Activated CD4-positive, alpha-beta T cell treated with anti-CD3 and anti-CD28 coated beads, Interleukin-2, amount 10 ng/mL, durations not matched to agents 24 days and 14 days (primary cell): ENCODE measurements at regions of chr21 and their contacts with region 1.

Region 1: DNA sequence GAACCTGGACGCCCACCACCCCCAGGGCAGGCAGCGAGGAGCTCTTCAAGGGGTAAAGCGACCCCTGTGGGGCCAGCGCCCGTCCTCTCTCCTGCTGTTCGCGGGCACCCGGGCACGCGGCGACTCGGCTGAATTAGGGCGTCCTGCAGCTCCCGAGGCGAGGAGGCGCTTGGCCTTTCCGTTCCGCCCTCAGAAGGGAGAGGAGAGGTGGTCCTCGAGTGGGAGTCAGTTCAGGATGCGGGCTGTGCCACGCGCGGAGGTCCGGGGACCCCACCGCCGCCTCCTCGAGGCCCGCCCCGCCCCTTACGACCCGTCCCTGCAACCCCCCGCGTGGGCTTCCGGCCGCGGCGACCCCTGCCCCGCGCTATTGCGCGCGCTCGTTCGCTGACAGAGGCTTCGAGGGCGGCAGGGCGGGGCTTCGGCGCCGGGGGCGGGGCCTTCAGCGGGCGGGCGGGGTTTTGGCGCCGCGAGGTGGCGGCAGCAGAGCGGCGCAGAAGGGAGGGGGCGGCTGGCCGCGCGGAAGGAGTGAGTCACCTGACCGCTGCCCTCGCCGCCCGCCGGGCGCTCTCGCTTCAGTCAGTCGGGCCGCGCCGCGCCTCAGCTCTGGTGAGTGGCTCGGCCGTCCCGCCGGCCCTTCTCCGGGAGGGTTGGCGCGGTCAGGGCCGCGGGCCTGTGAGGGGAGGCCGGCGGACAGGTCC is at the start of gene BACH1:
- DNase-seq: peak; percentile 94
- H3K4me3 Mint-ChIP-seq: peak within 1 kb of the TSS; percentile 91
- H3K27ac Mint-ChIP-seq: peak within 1 kb of the TSS; percentile 96
- H3K4me1 Mint-ChIP-seq: peaks cover 49% of the 10 kb centered on the region
- H3K27me3 Mint-ChIP-seq: no peaks in the 10 kb centered on the region
- total RNA-seq, gene BACH1: 21.5 and 24.8 TPM in 2 replicates

Region 2: GRCh38 chr21:28884976-28885852 is 413.3 kb before region 1 on chr21:
- intact Hi-C with region 1: loop called (anchors 5 kb)
- DNase-seq: peak; percentile 98
- H3K4me3 Mint-ChIP-seq: peak overlapping the region; percentile 89
- H3K27ac Mint-ChIP-seq: peak overlapping the region; percentile 97
- H3K4me1 Mint-ChIP-seq: peaks cover 14% of the 10 kb centered on the region
- H3K27me3 Mint-ChIP-seq: peaks cover 20% of the 10 kb centered on the region

Region 3: GRCh38 chr21:29024474-29025327 is 273.8 kb before region 1 on chr21 and contains the start of gene USP16:
- intact Hi-C with region 1: loop called (anchors 10 kb)
- DNase-seq: peak; percentile 99
- H3K4me3 Mint-ChIP-seq: peak within 1 kb of the TSS; percentile 93
- H3K27ac Mint-ChIP-seq: peak within 1 kb of the TSS; percentile 99
- H3K4me1 Mint-ChIP-seq: peaks cover 41% of the 10 kb centered on the region
- H3K27me3 Mint-ChIP-seq: no peaks in the 10 kb centered on the region
- total RNA-seq, gene USP16: 45.7 and 46.7 TPM in 2 replicates

Region 4: GRCh38 chr21:29091032-29091431 is 207.5 kb before region 1 on chr21:
- intact Hi-C with region 1: loop called (anchors 1 kb)
- DNase-seq: no peak
- H3K4me3 Mint-ChIP-seq: no peak overlapping the region
- H3K27ac Mint-ChIP-seq: no peak overlapping the region
- H3K4me1 Mint-ChIP-seq: peaks cover 17% of the 10 kb centered on the region
- H3K27me3 Mint-ChIP-seq: no peaks in the 10 kb centered on the region

Region 5: GRCh38 chr21:29232601-29233546 is 65.6 kb before region 1 on chr21:
- intact Hi-C with region 1: loop called (anchors 1 kb)
- DNase-seq: peak; percentile 48
- H3K4me3 Mint-ChIP-seq: no peak overlapping the region
- H3K27ac Mint-ChIP-seq: peak overlapping the region; percentile 39
- H3K4me1 Mint-ChIP-seq: peaks cover 36% of the 10 kb centered on the region
- H3K27me3 Mint-ChIP-seq: peaks cover 25% of the 10 kb centered on the region

Region 6: GRCh38 chr21:29256133-29256910 is 42.2 kb before region 1 on chr21:
- intact Hi-C with region 1: no loop called
- DNase-seq: peak; percentile 41
- H3K4me3 Mint-ChIP-seq: no peak overlapping the region
- H3K27ac Mint-ChIP-seq: no peak overlapping the region
- H3K4me1 Mint-ChIP-seq: no peaks in the 10 kb centered on the region
- H3K27me3 Mint-ChIP-seq: peaks cover 26% of the 10 kb centered on the region

Region 7: DNA sequence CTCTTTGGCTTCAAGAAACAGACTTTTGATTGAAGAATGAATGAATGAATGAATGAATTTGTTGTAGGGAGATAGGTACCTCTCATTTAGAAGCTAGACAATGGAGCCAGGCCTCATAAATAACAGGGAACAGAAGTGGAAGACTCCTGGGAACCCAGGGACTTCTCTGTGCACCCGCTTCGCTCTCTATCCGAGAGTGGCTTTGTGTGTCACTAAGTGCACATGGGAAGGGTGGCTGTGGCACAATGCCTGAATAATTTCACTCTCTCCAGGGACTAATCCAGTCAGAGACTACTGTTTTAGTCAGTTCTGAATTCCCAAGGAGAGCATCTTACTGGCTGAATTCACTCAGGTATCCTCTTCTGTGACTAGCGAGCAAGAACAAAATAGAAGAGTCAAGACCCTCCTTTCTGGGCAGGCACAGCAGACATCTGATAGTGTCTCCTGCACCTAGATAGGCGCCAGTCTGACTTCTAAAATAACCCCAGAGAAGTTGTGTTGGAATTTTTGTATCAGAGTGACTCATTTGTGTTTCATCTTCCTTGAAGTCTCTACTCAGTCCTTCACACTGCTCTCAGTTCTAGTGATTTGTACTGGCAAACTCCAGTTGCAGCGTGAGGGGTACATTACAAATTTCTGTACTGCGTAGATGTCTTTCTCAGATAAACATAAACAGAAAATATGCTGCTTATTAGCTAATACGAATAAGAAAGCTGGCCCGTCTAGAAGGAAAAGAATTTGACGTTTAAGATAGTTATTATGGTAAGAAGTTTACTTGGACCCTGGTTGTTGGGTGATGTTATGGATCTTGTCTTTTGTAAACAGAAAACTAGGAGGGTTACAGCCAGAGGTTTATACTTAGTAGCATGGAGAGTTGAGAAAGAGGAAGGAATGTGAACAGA is 34.2 kb after region 1 on chr21:
- intact Hi-C with region 1: loop called (anchors 2 kb)
- DNase-seq: no peak
- H3K4me3 Mint-ChIP-seq: no peak overlapping the region
- H3K27ac Mint-ChIP-seq: no peak overlapping the region
- H3K4me1 Mint-ChIP-seq: peaks cover 12% of the 10 kb centered on the region
- H3K27me3 Mint-ChIP-seq: no peaks in the 10 kb centered on the region